HAP-1 (cell line): ENCODE measurements at regions of chrX and their contacts with region 1.

Region 1: GRCh38 chrX:154762523-154763289 is at the start of gene DKC1:
- DNase-seq: peak; percentile 96 to 99
- H3K4me3 ChIP-seq: peak within 1 kb of the TSS; percentile 92
- H3K4me1 ChIP-seq: peaks cover 11% of the 10 kb centered on the region
- H3K27me3 ChIP-seq: no peaks in the 10 kb centered on the region

Region 2: GRCh38 chrX:154397819-154398724 is 364.6 kb before region 1 on chrX and contains the start of gene RPL10:
- in situ Hi-C with region 1: loop called (anchors 25 kb)
- DNase-seq: peak; percentile 97 to 99
- H3K4me3 ChIP-seq: peak within 1 kb of the TSS; percentile 78
- H3K4me1 ChIP-seq: peaks cover 9% of the 10 kb centered on the region
- H3K27me3 ChIP-seq: no peaks in the 10 kb centered on the region

Region 3: DNA sequence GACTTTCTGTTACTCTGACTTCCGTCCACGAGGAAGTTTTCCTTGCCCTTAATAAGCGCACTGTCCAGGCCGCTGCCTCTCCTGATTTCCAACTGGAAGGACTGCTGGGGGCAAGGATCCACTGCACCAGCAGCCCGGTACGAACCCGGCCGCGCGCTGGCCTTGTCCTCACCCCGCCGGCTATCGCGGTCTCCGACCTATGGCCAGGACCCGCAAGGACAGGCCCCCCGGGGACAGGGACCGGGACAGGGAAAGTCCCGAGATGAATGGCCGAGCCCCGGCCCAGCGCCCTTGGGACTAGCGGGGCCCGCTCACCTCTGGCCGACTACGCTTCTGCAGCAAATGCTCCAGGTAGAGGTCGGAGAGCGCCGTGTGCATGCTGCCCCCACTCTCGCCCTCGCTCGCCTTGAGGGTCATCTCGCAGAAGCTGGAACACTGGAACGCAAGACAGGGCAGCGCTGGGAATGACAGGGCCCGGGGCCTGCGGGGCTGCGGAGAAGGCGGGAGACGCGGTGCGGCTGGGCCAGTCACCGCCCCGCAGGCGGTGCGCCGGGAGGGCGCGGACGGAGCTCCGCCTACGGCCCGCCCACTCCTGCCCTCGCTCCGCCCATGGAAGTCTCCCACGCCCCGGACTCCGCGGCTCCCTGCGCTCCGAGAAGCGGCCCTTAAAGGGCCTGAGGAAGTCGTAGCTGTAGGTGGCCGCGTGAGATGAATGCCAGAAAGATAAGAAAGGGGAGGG is 42.4 kb after region 1 on chrX and contains the start of gene MPP1:
- in situ Hi-C with region 1: no loop called
- DNase-seq: peak; percentile 77 to 89
- H3K4me3 ChIP-seq: peak within 1 kb of the TSS; percentile 61
- H3K4me1 ChIP-seq: peaks cover 18% of the 10 kb centered on the region
- H3K27me3 ChIP-seq: no peaks in the 10 kb centered on the region

Region 4: DNA sequence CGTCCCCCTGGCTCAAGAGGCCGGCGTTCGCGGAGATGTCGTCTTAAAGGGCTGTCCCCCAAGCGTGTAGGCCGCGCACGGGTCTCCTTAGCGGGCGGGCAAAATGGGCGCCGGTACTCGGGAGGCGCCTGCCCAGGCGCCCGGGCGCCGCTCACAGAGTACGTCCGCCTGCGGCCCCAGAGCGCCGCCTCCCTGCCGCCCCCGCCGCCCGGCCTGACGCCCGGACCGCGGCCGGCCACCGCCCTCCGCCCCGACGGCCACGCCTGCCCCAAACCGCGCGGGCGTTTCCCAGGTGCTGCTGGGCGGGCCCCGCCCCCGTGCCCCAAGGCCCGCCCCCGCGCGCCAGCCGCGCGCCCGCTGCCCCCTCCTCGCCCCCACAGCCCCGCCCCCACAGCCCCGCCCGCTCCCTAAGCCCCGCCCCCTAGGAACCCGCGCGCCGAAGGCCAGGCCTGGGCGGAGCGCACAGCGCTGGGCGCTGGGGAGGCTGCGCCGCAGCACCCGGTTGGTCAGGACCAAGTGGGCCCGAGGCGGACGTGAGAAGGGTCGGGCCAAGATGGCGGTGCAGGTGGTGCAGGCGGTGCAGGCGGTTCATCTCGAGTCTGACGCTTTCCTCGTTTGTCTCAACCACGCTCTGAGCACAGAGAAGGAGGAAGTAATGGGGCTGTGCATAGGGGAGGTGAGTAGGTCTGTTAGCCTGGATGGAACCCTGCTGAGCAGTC is 308.4 kb after region 1 on chrX and contains the starts of genes BRCC3, CMC4 and MTCP1:
- in situ Hi-C with region 1: loop called (anchors 25 kb)
- DNase-seq: peak; percentile 83 to 91
- H3K4me3 ChIP-seq: peak within 1 kb of the TSS; percentile 83
- H3K4me1 ChIP-seq: peaks cover 8% of the 10 kb centered on the region
- H3K27me3 ChIP-seq: no peaks in the 10 kb centered on the region